H1 (cell line): ENCODE measurements at regions of chr7 and their contacts with region 1.

Region 1: GRCh38 chr7:14673202-14673601 is 229.3 kb downstream of the DGKB start:
- DNase-seq: no peak
- H3K4me3 ChIP-seq: no peak overlapping the region
- H3K27ac ChIP-seq: no peak overlapping the region
- H3K4me1 ChIP-seq: no peaks in the 10 kb centered on the region
- H3K27me3 ChIP-seq: no peaks in the 10 kb centered on the region
- CTCF ChIP-seq: no peak
- EP300 ChIP-seq: no peak
- POLR2A ChIP-seq: no peak
- RAD21 ChIP-seq: no peak

Region 2: DNA sequence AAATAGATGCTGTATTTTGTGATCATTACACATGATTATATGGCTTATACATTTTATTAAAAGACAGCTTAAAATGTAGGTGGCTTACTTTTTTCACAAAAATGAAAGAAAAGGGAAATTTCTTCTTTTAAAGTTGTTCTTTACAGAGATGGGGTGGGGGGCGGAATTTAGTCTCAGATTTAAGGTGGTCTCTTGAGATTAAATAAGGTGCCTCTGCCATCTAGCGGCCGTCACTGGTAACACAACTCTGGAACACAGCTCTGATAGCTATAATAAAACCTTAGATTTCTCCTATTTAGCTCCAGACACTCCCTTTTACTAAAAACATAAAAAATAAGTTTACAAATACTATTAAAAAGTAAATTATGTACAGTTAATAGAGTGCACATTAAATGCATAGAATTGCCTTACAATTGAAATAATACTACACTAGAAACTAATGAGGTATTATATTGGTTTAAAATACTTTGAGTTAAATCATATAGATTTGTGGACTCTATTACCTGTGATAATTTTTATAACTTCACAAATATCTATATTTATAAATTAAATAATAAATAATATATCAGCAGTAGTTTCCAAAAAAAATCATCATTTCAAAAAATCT is 18.5 kb after region 1 on chr7:
- CTCF ChIA-PET with region 1: interaction called, 15 read pairs
- POLR2A ChIA-PET with region 1: no interaction called
- DNase-seq: peak; percentile 29 to 75
- H3K4me3 ChIP-seq: no peak overlapping the region
- H3K27ac ChIP-seq: no peak overlapping the region
- H3K4me1 ChIP-seq: no peaks in the 10 kb centered on the region
- H3K27me3 ChIP-seq: no peaks in the 10 kb centered on the region
- CTCF ChIP-seq: peak in 2 of 3 experiments; percentile 61 to 65; a peak in 3 of 4 replicates
- EP300 ChIP-seq: no peak
- POLR2A ChIP-seq: no peak
- RAD21 ChIP-seq: peak; percentile 85 to 86